PC-9 (cell line): ENCODE measurements at regions of chr2 and their contacts with region 1.

Region 1: GRCh38 chr2:151238527-151239487 is 22.9 kb downstream of the RBM43 start:
- DNase-seq: peak; percentile 43 to 59
- H3K4me3 ChIP-seq: no peak overlapping the region
- H3K27ac ChIP-seq: no peak overlapping the region
- H3K4me1 ChIP-seq: 0 out of 2 replicates have a peak, but pooled peaks cover 4% of the 10 kb centered on the region
- H3K27me3 ChIP-seq: no peaks in the 10 kb centered on the region
- CTCF ChIP-seq: peak; percentile 89

Region 2: GRCh38 chr2:150624001-150624401 is 614.8 kb before region 1 on chr2:
- CTCF ChIA-PET with region 1: no interaction called
- POLR2A ChIA-PET with region 1: no interaction called
- intact Hi-C with region 1: loop called (anchors 5 kb)
- DNase-seq: no peak
- H3K4me3 ChIP-seq: no peak overlapping the region
- H3K27ac ChIP-seq: no peak overlapping the region
- H3K4me1 ChIP-seq: peaks cover 17% of the 10 kb centered on the region
- H3K27me3 ChIP-seq: no peaks in the 10 kb centered on the region
- CTCF ChIP-seq: no peak

Region 3: GRCh38 chr2:151051574-151052220 is 187.1 kb before region 1 on chr2:
- CTCF ChIA-PET with region 1: no interaction called
- POLR2A ChIA-PET with region 1: no interaction called
- intact Hi-C with region 1: loop called (anchors 10 kb)
- DNase-seq: peak in 1 of 2 experiments; percentile 12
- H3K4me3 ChIP-seq: no peak overlapping the region
- H3K27ac ChIP-seq: no peak overlapping the region
- H3K4me1 ChIP-seq: peaks cover 15% of the 10 kb centered on the region; the same call in 1 of the 2 replicates
- H3K27me3 ChIP-seq: no peaks in the 10 kb centered on the region
- CTCF ChIP-seq: peak; percentile 63